Activated T-helper 1 cell treated with anti-CD3 and anti-CD28 coated beads, Interleukin-12 subunit alpha, Interleukin-12 subunit beta, Interleukin-2, Interleukin-4 antibody, amounts not matched to agents 30 ng/mL and 10 ng/mL and 1 ng/mL, durations not matched to agents 14 hours and 24 hours and 36 hours (primary cell): ENCODE measurements at regions of chr6 and their contacts with region 1.

Region 1: GRCh38 chr6:143450453-143451371 is at the starts of genes ADAT2 and PEX3:
- DNase-seq: peak; percentile 92
- H3K4me3 Mint-ChIP-seq: peak within 1 kb of the TSS; percentile 98
- H3K27ac Mint-ChIP-seq: peak within 1 kb of the TSS; percentile 99
- H3K4me1 Mint-ChIP-seq: peaks cover 50% of the 10 kb centered on the region
- H3K27me3 Mint-ChIP-seq: no peaks in the 10 kb centered on the region
- total RNA-seq, gene ADAT2: 39.0 and 43.6 TPM in 2 replicates
- total RNA-seq, gene PEX3: 23.6 and 25.0 TPM in 2 replicates

Region 2: GRCh38 chr6:143060354-143060805 is 390.3 kb before region 1 on chr6:
- intact Hi-C with region 1: loop called (anchors 5 kb)
- DNase-seq: peak; percentile 72
- H3K4me3 Mint-ChIP-seq: peak overlapping the region; percentile 90
- H3K27ac Mint-ChIP-seq: peak overlapping the region; percentile 94
- H3K4me1 Mint-ChIP-seq: peaks cover 28% of the 10 kb centered on the region
- H3K27me3 Mint-ChIP-seq: no peaks in the 10 kb centered on the region

Region 3: DNA sequence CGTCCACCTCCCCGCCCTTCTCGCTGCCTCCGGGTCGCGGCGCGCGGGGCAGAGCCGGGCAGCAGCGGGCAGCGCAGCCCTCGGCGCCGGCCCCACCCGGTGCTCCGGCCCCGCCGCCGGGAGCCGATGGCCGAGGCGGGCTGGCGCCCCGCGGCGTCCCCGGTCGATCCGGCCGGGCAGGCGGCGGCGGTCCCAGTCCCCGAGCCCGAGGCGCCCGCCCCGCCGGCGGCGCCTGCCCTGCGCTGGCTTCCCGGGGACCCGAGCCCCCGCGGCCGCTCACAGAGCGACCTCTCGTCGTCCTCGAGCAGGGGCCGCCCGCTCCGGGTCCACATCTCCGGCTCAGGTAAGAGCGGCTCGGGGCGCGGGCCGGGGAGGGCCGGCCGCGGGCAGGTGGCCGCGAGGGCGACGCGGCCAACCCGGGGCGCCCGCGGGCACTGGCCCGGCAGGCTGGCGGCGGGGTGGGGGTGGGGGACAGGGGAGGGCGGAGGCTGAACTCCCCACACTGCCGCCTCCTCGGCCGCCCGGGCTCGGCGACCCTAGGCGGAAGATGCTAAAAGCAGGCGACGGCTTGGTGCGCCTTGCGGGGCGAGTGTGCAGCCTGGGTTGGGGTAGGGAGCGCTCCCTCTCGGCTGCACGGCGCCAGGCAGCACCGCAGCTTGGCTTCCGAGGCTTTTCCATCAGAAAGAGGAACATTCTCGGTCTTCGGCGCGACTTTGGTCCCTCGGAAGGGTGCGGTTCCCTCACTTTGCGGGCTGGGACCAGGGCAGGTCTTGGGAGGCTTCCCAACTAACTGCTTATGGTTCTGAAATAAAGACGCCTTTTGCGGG is 86.4 kb after region 1 on chr6:
- intact Hi-C with region 1: loop called (anchors 2 kb)
- DNase-seq: peak; percentile 50
- H3K4me3 Mint-ChIP-seq: peak overlapping the region; percentile 88
- H3K27ac Mint-ChIP-seq: peak overlapping the region; percentile 76
- H3K4me1 Mint-ChIP-seq: peaks cover 32% of the 10 kb centered on the region
- H3K27me3 Mint-ChIP-seq: no peaks in the 10 kb centered on the region

Region 4: GRCh38 chr6:144063744-144064401 is 613.2 kb after region 1 on chr6:
- intact Hi-C with region 1: loop called (anchors 2 kb)
- DNase-seq: peak; percentile 89
- H3K4me3 Mint-ChIP-seq: peak overlapping the region; percentile 83
- H3K27ac Mint-ChIP-seq: peak overlapping the region; percentile 82
- H3K4me1 Mint-ChIP-seq: peaks cover 44% of the 10 kb centered on the region
- H3K27me3 Mint-ChIP-seq: no peaks in the 10 kb centered on the region